Caco-2 (cell line): ENCODE measurements at regions of chr2 and their contacts with region 1.

Region 1: DNA sequence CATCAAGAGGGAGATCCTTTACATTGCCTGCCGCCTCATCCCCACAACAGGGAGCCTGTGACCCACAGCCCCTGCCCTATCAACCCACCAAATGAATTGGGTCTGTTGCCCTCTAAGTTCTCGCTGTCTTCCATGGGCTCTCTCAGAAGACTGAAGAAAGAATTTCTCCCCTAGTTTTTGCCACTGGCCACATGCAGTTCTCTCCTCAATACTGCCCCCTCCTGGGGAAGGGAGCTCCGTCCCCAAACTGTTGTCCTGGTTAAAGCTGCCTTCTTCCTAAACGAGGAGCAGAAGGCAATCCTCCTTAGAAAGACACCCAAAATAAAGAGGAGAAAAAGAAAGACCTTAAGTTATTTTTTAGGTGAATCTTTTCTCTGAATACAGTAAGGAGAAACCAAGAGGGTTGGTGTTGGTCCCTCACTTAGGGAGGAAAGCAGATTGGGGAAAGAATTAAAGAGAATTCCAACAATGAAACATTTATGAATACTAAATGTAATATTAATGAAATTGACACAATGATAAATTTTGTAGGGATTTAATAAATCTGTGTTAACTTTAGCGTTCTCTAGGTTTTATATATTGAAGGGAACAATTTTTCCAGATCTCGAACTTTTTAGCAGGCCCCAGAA is 31.1 kb upstream of the SATB2 start:
- DNase-seq: peak in 1 of 2 experiments; percentile 72
- H3K4me3 ChIP-seq: no peak overlapping the region
- H3K4me3 Mint-ChIP-seq: no peak overlapping the region
- H3K27ac Mint-ChIP-seq: no peak overlapping the region
- H3K4me1 ChIP-seq: no peaks in the 10 kb centered on the region
- H3K4me1 Mint-ChIP-seq: no peaks in the 10 kb centered on the region
- H3K27me3 ChIP-seq: no peaks in the 10 kb centered on the region
- H3K27me3 Mint-ChIP-seq: peaks cover 7% of the 10 kb centered on the region
- CTCF ChIP-seq: peak; percentile 73 to 84

Region 2: GRCh38 chr2:198309673-198310280 is 1179.1 kb before region 1 on chr2:
- CTCF ChIA-PET with region 1: interaction called, 3 read pairs
- POLR2A ChIA-PET with region 1: no interaction called
- intact Hi-C with region 1: loop called (anchors 1 kb)
- DNase-seq: peak in 1 of 2 experiments; percentile 63
- H3K4me3 ChIP-seq: no peak overlapping the region
- H3K4me3 Mint-ChIP-seq: no peak overlapping the region
- H3K27ac Mint-ChIP-seq: no peak overlapping the region
- H3K4me1 ChIP-seq: 0 out of 2 replicates have a peak, but pooled peaks cover 3% of the 10 kb centered on the region
- H3K4me1 Mint-ChIP-seq: no peaks in the 10 kb centered on the region
- H3K27me3 ChIP-seq: no peaks in the 10 kb centered on the region; the same call in 1 of the 2 replicates
- H3K27me3 Mint-ChIP-seq: peaks cover 16% of the 10 kb centered on the region
- CTCF ChIP-seq: peak; percentile 76 to 80

Region 3: DNA sequence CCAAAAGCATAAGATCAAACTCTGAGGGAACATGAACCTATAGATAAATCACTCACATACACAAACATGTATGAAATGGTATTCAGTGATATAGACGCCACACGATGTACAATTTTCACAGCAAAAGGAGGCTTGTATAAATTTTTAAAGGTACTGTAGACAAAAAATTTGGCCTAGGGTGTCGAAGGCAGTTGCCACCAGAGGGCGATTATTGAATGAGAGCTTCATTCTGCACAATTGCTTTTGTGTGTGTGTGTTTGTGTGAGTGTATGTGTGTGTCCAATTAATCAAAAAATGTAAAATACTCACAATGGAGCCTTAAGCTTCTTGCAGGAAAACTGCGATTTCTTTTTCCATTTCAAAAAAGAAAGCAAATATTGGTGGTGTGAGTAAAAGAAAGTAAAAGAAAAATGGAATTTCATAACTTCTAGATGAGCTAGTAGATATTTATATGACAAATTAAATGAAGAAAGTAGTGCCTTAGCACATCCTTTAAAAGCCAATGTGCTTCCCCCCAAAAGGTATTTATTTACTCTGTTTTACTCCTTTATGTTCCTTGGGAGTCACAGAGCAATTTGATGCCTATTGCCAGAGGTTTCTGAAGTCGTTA is 831.3 kb before region 1 on chr2:
- CTCF ChIA-PET with region 1: no interaction called
- POLR2A ChIA-PET with region 1: no interaction called
- intact Hi-C with region 1: loop called (anchors 1 kb)
- DNase-seq: peak in 1 of 2 experiments; percentile 22
- H3K4me3 ChIP-seq: no peak overlapping the region
- H3K4me3 Mint-ChIP-seq: no peak overlapping the region
- H3K27ac Mint-ChIP-seq: no peak overlapping the region
- H3K4me1 ChIP-seq: no peaks in the 10 kb centered on the region
- H3K4me1 Mint-ChIP-seq: no peaks in the 10 kb centered on the region
- H3K27me3 ChIP-seq: no peaks in the 10 kb centered on the region
- H3K27me3 Mint-ChIP-seq: no peaks in the 10 kb centered on the region
- CTCF ChIP-seq: peak; percentile 66 to 79

Region 4: DNA sequence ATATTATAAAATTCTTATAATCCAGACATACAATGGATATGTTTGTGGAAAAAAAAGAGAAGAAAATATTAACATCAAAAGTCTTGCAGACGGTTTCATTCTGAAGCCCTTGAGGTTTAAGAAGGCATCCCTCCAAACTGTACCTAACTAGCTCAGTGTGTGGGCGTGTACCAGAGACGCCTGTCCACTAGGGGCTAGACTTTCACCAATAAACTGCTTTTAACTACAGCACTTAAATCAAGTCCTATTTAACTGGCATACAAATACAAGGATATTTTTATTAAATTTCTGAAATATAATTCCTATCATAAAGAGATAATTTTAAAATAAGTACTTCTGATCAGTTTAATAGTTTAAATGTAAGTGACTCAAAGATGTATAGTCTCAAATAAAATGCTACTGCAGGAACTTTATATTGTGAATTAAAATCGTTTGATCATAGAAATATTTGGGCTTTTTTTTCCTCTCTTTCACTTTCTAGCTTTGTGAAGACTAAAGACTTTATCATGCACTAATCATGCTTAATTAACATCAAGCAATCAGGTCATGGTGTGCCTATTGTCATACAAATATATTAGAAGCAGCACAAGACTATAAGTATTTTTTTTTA is 468.9 kb before region 1 on chr2:
- CTCF ChIA-PET with region 1: no interaction called
- POLR2A ChIA-PET with region 1: no interaction called
- intact Hi-C with region 1: loop called (anchors 5 kb)
- DNase-seq: peak in 1 of 2 experiments; percentile 14
- H3K4me3 ChIP-seq: no peak overlapping the region
- H3K4me3 Mint-ChIP-seq: no peak overlapping the region
- H3K27ac Mint-ChIP-seq: no peak overlapping the region
- H3K4me1 ChIP-seq: no peaks in the 10 kb centered on the region
- H3K4me1 Mint-ChIP-seq: no peaks in the 10 kb centered on the region
- H3K27me3 ChIP-seq: no peaks in the 10 kb centered on the region
- H3K27me3 Mint-ChIP-seq: no peaks in the 10 kb centered on the region
- CTCF ChIP-seq: peak in 1 of 2 experiments; percentile 70

Region 5: GRCh38 chr2:199471443-199472057 is 17.3 kb before region 1 on chr2:
- CTCF ChIA-PET with region 1: interaction called, 14 read pairs
- POLR2A ChIA-PET with region 1: no interaction called
- intact Hi-C with region 1: loop called (anchors 1 kb)
- DNase-seq: peak; percentile 66 to 84
- H3K4me3 ChIP-seq: no peak overlapping the region
- H3K4me3 Mint-ChIP-seq: peak overlapping the region; percentile 19
- H3K27ac Mint-ChIP-seq: no peak overlapping the region
- H3K4me1 ChIP-seq: no peaks in the 10 kb centered on the region
- H3K4me1 Mint-ChIP-seq: no peaks in the 10 kb centered on the region
- H3K27me3 ChIP-seq: no peaks in the 10 kb centered on the region; the same call in none of the 2 replicates
- H3K27me3 Mint-ChIP-seq: peaks cover 19% of the 10 kb centered on the region
- CTCF ChIP-seq: peak; percentile 66 to 85

Region 6: GRCh38 chr2:200306196-200306930 is 817.5 kb after region 1 on chr2 and contains the start of gene SPATS2L:
- CTCF ChIA-PET with region 1: no interaction called
- POLR2A ChIA-PET with region 1: no interaction called
- intact Hi-C with region 1: no loop called
- DNase-seq: peak; percentile 90 to 94
- H3K4me3 ChIP-seq: peak within 1 kb of the TSS; percentile 88
- H3K4me3 Mint-ChIP-seq: peak within 1 kb of the TSS; percentile 89
- H3K27ac Mint-ChIP-seq: peak within 1 kb of the TSS; percentile 97
- H3K4me1 ChIP-seq: peaks cover 69% of the 10 kb centered on the region
- H3K4me1 Mint-ChIP-seq: peaks cover 40% of the 10 kb centered on the region
- H3K27me3 ChIP-seq: no peaks in the 10 kb centered on the region
- H3K27me3 Mint-ChIP-seq: no peaks in the 10 kb centered on the region
- CTCF ChIP-seq: no peak
- total RNA-seq, gene SPATS2L: 189 and 196 TPM in 2 replicates